ENCODE measurements at regions of chr1 and their contacts with region 1.

Region 1: DNA sequence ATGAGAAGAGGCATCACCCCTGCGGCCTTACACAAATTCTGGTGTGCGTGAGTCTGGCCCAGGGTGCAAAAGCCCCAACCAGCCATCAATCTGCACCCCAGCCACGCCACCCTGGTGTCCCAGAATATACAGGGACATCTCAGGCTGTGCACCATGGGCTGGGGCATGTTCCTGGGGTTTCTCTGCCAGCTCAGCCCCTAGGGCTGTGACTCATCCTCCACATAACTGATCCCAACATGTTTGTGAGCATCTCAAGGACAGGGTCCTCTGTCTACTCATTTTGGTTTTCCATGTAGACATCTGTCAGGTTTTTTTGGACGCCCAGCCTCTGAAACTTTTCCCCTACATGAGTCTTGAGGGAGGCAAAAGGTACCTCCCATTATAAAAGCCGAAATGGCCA is 511 bp downstream of the ZNF683 start:
- DNase-seq: peak in 1 of 14 experiments; percentile 46
- ATAC-seq: no peak
- H3K4me3 ChIP-seq: no peak overlapping the region
- H3K4me3 Mint-ChIP-seq: peak overlapping the region; percentile 31
- H3K27ac ChIP-seq: peak overlapping the region in 1 of 2 donors; percentile 52
- H3K27ac Mint-ChIP-seq: peak overlapping the region; percentile 92
- H3K4me1 ChIP-seq: peaks cover 99% of the 10 kb centered on the region
- H3K4me1 Mint-ChIP-seq: peaks cover 75% of the 10 kb centered on the region
- H3K27me3 ChIP-seq: no peaks in the 10 kb centered on the region
- H3K27me3 Mint-ChIP-seq: no peaks in the 10 kb centered on the region
- CTCF ChIP-seq: no peak

Region 2: DNA sequence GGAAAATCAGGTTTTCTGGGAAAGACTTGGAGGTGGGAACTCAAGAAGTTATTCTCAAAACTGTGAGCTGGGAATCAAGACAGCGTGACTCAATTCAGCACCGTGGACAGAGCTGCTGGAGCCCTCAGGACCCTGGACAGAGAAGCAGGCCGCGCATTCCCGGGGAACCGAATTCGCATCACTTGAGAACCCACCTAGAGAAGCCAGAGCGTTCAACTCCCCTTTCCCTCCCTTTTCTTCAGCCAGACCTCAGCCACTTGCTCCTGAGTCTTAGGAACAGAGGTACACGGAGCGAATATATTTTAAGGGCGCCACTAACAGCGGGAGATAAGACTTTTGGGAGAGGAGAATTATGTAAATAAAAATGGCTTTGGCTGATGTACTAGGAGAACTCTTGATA is 36.6 kb after region 1 on chr1:
- CTCF ChIA-PET with region 1: no interaction called
- POLR2A ChIA-PET with region 1: no interaction called
- intact Hi-C with region 1: loop called in 1 of 2 experiments (anchors 2 kb)
- DNase-seq: peak; percentile 65 to 89 (median 77)
- ATAC-seq: peak; percentile 96
- H3K4me3 ChIP-seq: no peak overlapping the region
- H3K4me3 Mint-ChIP-seq: peak overlapping the region; percentile 12
- H3K27ac ChIP-seq: no peak overlapping the region
- H3K27ac Mint-ChIP-seq: no peak overlapping the region
- H3K4me1 ChIP-seq: peaks cover 31% of the 10 kb centered on the region
- H3K4me1 Mint-ChIP-seq: peaks cover 30% of the 10 kb centered on the region
- H3K27me3 ChIP-seq: peaks cover 47 to 58% of the 10 kb centered on the region in 2 experiments
- H3K27me3 Mint-ChIP-seq: peaks cover 65% of the 10 kb centered on the region
- CTCF ChIP-seq: no peak